ENCODE measurements at regions of chr13 and their contacts with region 1.

Region 1: DNA sequence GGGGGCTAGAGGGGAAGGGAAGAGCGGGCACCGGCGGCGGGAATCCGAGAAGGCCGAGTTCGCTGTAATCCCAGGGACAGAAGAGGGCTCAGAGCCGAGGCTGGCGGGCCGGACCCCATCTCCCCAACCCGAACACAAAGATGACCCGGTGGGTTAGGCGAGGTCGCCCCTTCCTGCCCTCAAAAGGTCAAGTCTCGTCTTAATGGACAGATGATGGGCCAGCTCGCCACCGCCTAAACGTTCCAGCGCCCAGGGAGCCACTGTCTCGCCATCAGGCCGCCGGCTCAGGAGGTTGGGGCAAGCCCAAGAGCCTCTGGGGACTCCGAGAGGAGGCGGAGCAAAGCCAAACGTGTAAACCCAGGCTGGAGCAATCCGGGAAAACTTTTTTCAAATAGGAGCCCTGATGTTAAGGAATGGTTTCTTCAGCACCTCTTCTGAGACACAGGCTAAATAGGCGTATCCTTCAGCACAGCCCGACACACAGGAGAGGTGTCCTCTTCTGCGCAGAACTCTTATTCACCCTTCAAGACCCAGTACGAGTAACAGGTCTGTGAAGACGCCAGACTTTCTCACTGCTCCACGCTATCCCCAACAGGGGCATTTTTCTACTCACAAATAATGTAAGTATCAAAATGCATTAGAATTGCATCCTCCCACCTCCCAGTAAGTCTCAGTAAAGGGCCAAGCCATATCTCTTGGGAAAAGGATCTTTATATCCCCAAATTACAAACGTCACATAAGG is 6.3 kb upstream of the POU4F1 start:
- DNase-seq: no peak
- ATAC-seq: peak in 5 of 8 donors; percentile 35 to 66 (median 46)
- H3K4me3 ChIP-seq: peak overlapping the region; percentile 31 to 62 (median 54)
- H3K27ac ChIP-seq: no peak overlapping the region
- H3K4me1 ChIP-seq: peaks cover 4 to 36% (median 30%) of the 10 kb centered on the region in 9 donors
- H3K27me3 ChIP-seq: peaks cover 25 to 80% (median 67%) of the 10 kb centered on the region in 7 donors
- CTCF ChIP-seq: no peak

Region 2: DNA sequence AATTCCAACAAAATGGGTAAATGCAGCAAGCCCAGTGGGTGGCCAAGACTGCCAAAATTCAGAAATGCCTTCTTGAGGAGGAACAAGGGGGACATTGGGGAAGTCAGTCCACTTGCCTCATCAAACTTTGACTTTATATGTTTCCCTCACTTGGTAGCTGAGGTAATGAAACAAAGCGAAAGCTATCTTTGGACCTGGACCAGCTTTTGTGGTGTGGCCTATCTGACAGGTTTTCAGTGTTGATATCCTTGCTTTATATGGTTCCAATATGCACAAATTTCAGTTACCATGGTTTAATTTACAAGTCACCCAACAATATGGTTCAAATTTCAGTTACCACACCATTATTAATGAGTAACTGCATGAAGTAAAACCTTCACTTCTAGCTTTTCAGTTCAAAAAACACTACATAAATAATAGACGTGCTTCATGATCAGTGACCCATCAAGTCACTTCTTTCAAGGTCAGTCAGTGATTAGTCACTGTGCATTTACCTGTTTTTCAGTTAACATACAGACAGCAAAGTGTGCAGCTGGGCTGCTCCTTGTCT is 11.4 kb after region 1 on chr13:
- intact Hi-C with region 1: no loop called
- DNase-seq: no peak
- ATAC-seq: no peak
- H3K4me3 ChIP-seq: no peak overlapping the region
- H3K27ac ChIP-seq: no peak overlapping the region
- H3K4me1 ChIP-seq: no peaks in the 10 kb centered on the region
- H3K27me3 ChIP-seq: no peaks in the 10 kb centered on the region
- CTCF ChIP-seq: no peak

Region 3: GRCh38 chr13:78649997-78650716 is 40.5 kb after region 1 on chr13:
- intact Hi-C with region 1: loop called in 3 of 10 experiments (anchors 5 to 10 kb)
- DNase-seq: no peak
- ATAC-seq: peak in 1 of 8 donors; percentile 58
- H3K4me3 ChIP-seq: no peak overlapping the region
- H3K27ac ChIP-seq: no peak overlapping the region
- H3K4me1 ChIP-seq: peaks cover 0 to 70% (median 50%) of the 10 kb centered on the region in 9 donors
- H3K27me3 ChIP-seq: no peaks in the 10 kb centered on the region
- CTCF ChIP-seq: no peak

Region 4: GRCh38 chr13:78658635-78659449 is 49.2 kb after region 1 on chr13 and contains the start of gene OBI1:
- intact Hi-C with region 1: loop called in 2 of 10 experiments (anchors 5 to 10 kb)
- DNase-seq: peak; percentile 92 to 93
- ATAC-seq: peak; percentile 95 to 99 (median 98)
- H3K4me3 ChIP-seq: peak within 1 kb of the TSS; percentile 59 to 97 (median 90)
- H3K27ac ChIP-seq: peak within 1 kb of the TSS; percentile 23 to 87 (median 83)
- H3K4me1 ChIP-seq: peaks cover 0 to 40% (median 33%) of the 10 kb centered on the region in 9 donors
- H3K27me3 ChIP-seq: peaks cover 0 to 5% (median 0%) of the 10 kb centered on the region in 7 donors
- CTCF ChIP-seq: no peak
- total RNA-seq, gene OBI1: 6.2 to 12.3 (median 9.6) TPM

Region 5: DNA sequence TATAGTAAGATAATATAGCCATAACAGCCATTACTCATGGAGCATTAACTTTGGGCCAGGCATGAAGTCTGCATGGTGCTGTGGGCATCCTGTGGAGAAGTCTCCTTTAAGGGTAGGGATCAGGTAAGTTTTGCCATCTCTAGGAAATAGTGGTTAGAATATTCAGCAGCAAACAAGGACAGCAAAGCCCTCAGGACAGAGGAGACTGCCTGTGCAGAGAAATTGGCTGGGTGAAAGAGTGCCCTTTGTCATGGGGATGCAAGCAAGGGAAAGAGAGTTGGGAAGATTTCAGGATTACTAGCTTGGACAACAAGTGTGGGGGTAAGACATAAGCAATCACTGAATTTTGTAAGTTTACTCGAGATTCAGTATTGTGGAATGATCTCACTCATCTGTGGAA is 65.0 kb after region 1 on chr13:
- intact Hi-C with region 1: loop called in 1 of 10 experiments (anchors 5 kb)
- DNase-seq: no peak
- ATAC-seq: no peak
- H3K4me3 ChIP-seq: no peak overlapping the region
- H3K27ac ChIP-seq: no peak overlapping the region
- H3K4me1 ChIP-seq: peaks cover 0 to 9% (median 4%) of the 10 kb centered on the region in 9 donors
- H3K27me3 ChIP-seq: peaks cover 0 to 5% (median 0%) of the 10 kb centered on the region in 7 donors
- CTCF ChIP-seq: no peak

Measured in heart right ventricle (tissue), 16 donors.